Ovary (tissue), 10 donors: ENCODE measurements at regions of chr17 and their contacts with region 1.

Region 1: GRCh38 chr17:7515911-7516610 is 31.9 kb downstream of the POLR2A start:
- DNase-seq: no peak
- H3K4me3 ChIP-seq: no peak overlapping the region
- H3K27ac ChIP-seq: no peak overlapping the region
- H3K4me1 ChIP-seq: no peaks in the 10 kb centered on the region
- H3K27me3 ChIP-seq: no peaks in the 10 kb centered on the region
- CTCF ChIP-seq: no peak
- EP300 ChIP-seq: no peak
- POLR2A ChIP-seq: no peak

Region 2: GRCh38 chr17:7561028-7561575 is 45.0 kb after region 1 on chr17:
- intact Hi-C with region 1: loop called (anchors 2 to 5 kb)
- DNase-seq: peak; percentile 88 to 95 (median 94)
- H3K4me3 ChIP-seq: peak overlapping the region; percentile 89
- H3K27ac ChIP-seq: peak overlapping the region; percentile 67 to 99
- H3K4me1 ChIP-seq: peaks cover 27% of the 10 kb centered on the region
- H3K27me3 ChIP-seq: no peaks in the 10 kb centered on the region
- CTCF ChIP-seq: peak; percentile 79 to 94 (median 89)
- EP300 ChIP-seq: no peak
- POLR2A ChIP-seq: no peak

Region 3: GRCh38 chr17:7586673-7587419 is 70.8 kb after region 1 on chr17:
- intact Hi-C with region 1: loop called in 2 of 4 experiments (anchors 2 to 10 kb)
- DNase-seq: no peak
- H3K4me3 ChIP-seq: no peak overlapping the region
- H3K27ac ChIP-seq: no peak overlapping the region
- H3K4me1 ChIP-seq: peaks cover 21% of the 10 kb centered on the region
- H3K27me3 ChIP-seq: no peaks in the 10 kb centered on the region
- CTCF ChIP-seq: no peak
- EP300 ChIP-seq: no peak
- POLR2A ChIP-seq: no peak